ENCODE measurements at regions of chr9 and their contacts with region 1.

Region 1: GRCh38 chr9:38154501-38155421 is 85.7 kb upstream of the SHB start:
- DNase-seq: no peak
- ATAC-seq: no peak

Region 2: GRCh38 chr9:37769306-37769705 is 385.5 kb before region 1 on chr9:
- intact Hi-C with region 1: no loop called
- DNase-seq: no peak
- ATAC-seq: no peak

Region 3: GRCh38 chr9:38214432-38214831 is 59.7 kb after region 1 on chr9:
- intact Hi-C with region 1: loop called in 1 of 2 experiments (anchors 10 kb)
- DNase-seq: no peak
- ATAC-seq: no peak